Activated CD4-positive, alpha-beta memory T cell treated with anti-CD3 and anti-CD28 coated beads, Interleukin-2, amount 10 ng/mL, durations not matched to agents 7 days and 5 days (primary cell): ENCODE measurements at regions of chr2 and their contacts with region 1.

Region 1: GRCh38 chr2:180980106-180980942 is at the start of gene UBE2E3:
- DNase-seq: peak; percentile 82
- H3K4me3 Mint-ChIP-seq: peak within 1 kb of the TSS; percentile 90
- H3K27ac Mint-ChIP-seq: peak within 1 kb of the TSS; percentile 89
- H3K4me1 Mint-ChIP-seq: peaks cover 41% of the 10 kb centered on the region
- H3K27me3 Mint-ChIP-seq: peaks cover 19% of the 10 kb centered on the region
- total RNA-seq, gene UBE2E3: 42.1 to 42.5 TPM

Region 2: DNA sequence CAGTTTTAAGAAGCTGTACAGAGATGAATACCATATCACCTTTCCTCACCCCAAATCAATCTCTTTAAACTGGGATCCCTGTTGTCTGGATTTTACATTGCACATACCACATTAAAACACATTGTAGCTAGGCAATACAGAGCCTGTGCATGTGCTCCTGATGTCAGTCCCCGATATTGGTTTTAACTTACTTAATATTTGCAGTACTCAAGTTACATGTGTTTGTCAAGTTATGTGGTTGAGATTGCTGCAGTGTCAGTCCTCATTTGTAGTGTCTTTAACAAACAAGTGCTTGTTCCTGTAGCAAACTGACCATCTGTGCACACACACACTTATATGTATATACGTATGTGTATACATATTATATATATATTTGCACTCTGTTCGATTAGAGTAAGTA is 10.3 kb before region 1 on chr2:
- CTCF ChIA-PET with region 1: interaction called, 7 read pairs
- POLR2A ChIA-PET with region 1: interaction called, 15 read pairs
- DNase-seq: no peak
- H3K4me3 Mint-ChIP-seq: no peak overlapping the region
- H3K27ac Mint-ChIP-seq: no peak overlapping the region
- H3K4me1 Mint-ChIP-seq: no peaks in the 10 kb centered on the region
- H3K27me3 Mint-ChIP-seq: no peaks in the 10 kb centered on the region

Region 3: DNA sequence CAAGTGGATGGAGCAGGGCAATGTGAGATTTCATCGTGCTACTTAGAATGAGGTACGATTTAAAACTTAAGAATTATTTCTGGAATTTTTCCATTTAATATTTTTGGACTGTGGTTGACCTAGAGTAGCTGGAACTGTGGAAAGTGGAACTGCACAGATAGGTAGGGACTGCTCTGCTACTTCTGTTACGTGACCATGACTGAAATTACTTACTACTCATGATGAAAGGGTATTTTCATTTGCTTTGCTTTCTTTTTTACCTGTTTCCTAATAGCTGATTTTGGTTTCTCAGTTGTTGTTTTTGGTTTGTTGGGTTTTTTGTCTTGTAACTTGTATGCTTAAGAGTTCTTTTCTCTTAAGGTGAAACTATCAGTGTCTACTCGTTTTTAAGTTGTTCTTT is 11.5 kb after region 1 on chr2:
- CTCF ChIA-PET with region 1: interaction called, 15 read pairs
- POLR2A ChIA-PET with region 1: interaction called, 13 read pairs
- DNase-seq: no peak
- H3K4me3 Mint-ChIP-seq: no peak overlapping the region
- H3K27ac Mint-ChIP-seq: no peak overlapping the region
- H3K4me1 Mint-ChIP-seq: peaks cover 12% of the 10 kb centered on the region
- H3K27me3 Mint-ChIP-seq: no peaks in the 10 kb centered on the region

Region 4: GRCh38 chr2:181036848-181037603 is 56.7 kb after region 1 on chr2:
- CTCF ChIA-PET with region 1: interaction called, 3 read pairs
- POLR2A ChIA-PET with region 1: interaction called, 10 read pairs
- DNase-seq: peak; percentile 46
- H3K4me3 Mint-ChIP-seq: no peak overlapping the region
- H3K27ac Mint-ChIP-seq: peak overlapping the region; percentile 13
- H3K4me1 Mint-ChIP-seq: peaks cover 32% of the 10 kb centered on the region
- H3K27me3 Mint-ChIP-seq: no peaks in the 10 kb centered on the region

Region 5: DNA sequence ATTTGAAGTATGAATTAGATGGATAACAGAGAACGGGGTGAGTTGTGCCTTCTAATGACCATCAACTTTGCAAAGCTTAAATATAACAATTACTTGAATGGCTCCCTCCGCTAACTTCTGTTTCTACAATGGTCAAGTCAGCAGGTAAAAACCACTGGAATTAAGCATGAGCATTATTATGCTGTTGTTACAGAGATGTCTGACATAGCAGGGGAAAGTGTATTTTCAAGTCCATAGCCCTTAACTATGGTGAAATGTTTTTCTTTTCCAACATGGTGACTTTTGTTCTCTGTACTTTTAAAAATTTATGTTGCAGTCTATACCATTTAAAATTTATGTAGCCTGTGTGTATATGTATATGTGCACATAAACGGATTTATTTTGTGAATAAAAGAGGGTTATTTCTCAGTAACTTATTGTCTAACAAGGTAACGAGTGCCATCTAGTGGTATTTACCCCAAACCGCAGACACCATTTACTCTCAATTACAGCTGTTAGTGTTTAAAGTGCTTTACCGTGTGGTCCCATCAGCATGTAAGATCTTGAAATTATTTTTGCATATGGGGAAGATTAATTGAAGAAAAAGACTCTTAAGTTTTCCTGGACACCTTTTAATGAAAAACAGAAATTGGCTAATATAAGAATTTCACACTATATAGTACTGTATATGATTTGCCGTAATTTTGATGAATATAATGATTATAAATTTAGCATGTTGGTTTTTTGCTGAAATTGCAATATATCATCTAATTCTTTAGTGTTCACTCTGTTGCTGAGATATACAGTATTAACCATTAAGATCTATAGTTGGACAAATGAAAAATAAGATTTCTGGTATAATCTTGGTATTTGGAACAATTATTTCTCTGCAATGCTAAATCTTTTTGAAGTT is 78.3 kb after region 1 on chr2:
- CTCF ChIA-PET with region 1: interaction called, 14 read pairs
- POLR2A ChIA-PET with region 1: no interaction called
- DNase-seq: peak; percentile 26
- H3K4me3 Mint-ChIP-seq: no peak overlapping the region
- H3K27ac Mint-ChIP-seq: no peak overlapping the region
- H3K4me1 Mint-ChIP-seq: peaks cover 3% of the 10 kb centered on the region
- H3K27me3 Mint-ChIP-seq: no peaks in the 10 kb centered on the region